Heart right ventricle (tissue), 16 donors: ENCODE measurements at regions of chr3 and their contacts with region 1.

Region 1: GRCh38 chr3:167882067-167882667 is 146.6 kb downstream of the SERPINI1 start:
- DNase-seq: no peak
- ATAC-seq: peak in 4 of 8 donors; percentile 19 to 69 (median 48)
- H3K4me3 ChIP-seq: peak overlapping the region in 2 of 10 donors; percentile 20 to 30
- H3K27ac ChIP-seq: peak overlapping the region in 3 of 10 donors; percentile 12 to 46 (median 38)
- H3K4me1 ChIP-seq: peaks cover 0 to 23% (median 10%) of the 10 kb centered on the region in 9 donors
- H3K27me3 ChIP-seq: no peaks in the 10 kb centered on the region
- CTCF ChIP-seq: peak; percentile 49 to 84 (median 73)

Region 2: DNA sequence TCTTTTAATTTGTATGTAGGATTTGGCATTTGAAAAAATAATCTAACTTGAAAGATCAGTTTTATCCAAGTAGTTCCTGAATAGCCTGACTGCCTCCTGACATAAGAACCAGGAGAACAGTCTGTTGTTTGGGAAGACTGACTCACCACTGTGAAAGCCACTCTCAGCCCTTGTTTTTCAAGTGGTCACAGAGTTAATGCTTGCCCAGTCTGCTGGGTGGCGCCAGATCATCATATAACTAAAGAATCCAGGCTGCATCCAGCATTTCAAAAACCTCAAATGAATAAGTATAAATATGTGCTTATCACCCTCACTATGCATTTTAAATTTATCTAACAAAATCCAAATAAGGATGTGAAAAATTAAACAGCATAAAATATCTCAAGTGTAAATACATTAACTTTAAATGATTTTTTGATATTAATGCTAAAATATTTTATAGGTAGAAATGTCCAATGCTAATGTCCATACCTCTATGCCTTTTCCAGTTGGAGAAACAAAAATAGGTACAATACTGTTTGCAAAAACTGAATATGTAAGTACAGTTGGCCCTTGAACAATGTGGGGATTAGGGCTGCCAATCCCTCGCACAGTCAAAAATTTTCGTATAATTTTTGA is 475.2 kb before region 1 on chr3:
- intact Hi-C with region 1: loop called in 4 of 10 experiments (anchors 5 to 10 kb)
- DNase-seq: peak in 1 of 2 donors; percentile 21
- ATAC-seq: peak in 7 of 8 donors; percentile 43 to 96 (median 83)
- H3K4me3 ChIP-seq: no peak overlapping the region
- H3K27ac ChIP-seq: no peak overlapping the region
- H3K4me1 ChIP-seq: no peaks in the 10 kb centered on the region
- H3K27me3 ChIP-seq: no peaks in the 10 kb centered on the region
- CTCF ChIP-seq: peak in 7 of 9 donors; percentile 36 to 63 (median 52)

Region 3: GRCh38 chr3:167684388-167684993 is 197.7 kb before region 1 on chr3:
- intact Hi-C with region 1: loop called in 2 of 10 experiments (anchors 10 kb)
- DNase-seq: peak in 1 of 2 donors; percentile 63
- ATAC-seq: peak in 3 of 8 donors; percentile 50 to 58 (median 55)
- H3K4me3 ChIP-seq: no peak overlapping the region
- H3K27ac ChIP-seq: no peak overlapping the region
- H3K4me1 ChIP-seq: no peaks in the 10 kb centered on the region
- H3K27me3 ChIP-seq: no peaks in the 10 kb centered on the region
- CTCF ChIP-seq: peak; percentile 62 to 84 (median 79)

Region 4: DNA sequence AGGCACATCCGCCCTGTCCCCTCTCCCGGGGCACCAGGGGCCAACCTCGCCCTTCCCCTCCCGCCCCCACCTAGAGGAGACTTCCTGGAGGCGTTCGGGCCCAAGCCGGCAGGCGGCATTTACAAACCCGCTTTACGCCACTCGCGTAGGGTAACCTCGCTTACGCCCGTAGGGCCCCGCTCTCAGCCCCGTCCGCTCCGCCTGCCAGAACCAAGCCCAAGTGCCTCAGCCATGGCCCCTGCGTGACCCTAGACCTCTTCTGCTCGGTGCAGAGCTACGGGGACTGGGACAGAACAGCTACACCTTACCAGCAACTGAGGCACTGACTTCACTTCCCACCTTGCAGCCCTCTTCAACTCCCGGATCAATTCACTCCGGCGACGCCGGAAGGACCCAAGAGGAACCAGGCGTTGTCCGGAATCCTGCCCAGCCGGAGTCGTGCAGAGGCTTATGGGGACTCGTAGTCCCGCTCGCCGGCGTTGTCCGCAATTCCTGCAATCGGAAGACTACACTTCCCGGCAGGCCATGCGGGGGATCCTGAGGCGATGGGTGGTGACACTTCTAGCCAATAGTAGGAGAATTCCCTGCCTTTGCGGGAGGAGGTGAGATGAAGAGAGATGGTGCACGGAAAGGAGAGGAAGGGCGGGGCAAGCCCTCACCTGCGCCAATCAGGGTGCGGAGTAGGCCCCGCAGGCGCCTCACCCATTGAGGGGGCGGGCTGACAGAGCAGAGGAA is 147.5 kb before region 1 on chr3 and contains the start of gene PDCD10:
- intact Hi-C with region 1: loop called in 5 of 10 experiments (anchors 5 to 10 kb)
- DNase-seq: peak; percentile 97 to 98
- ATAC-seq: peak; percentile 96 to 98 (median 97)
- H3K4me3 ChIP-seq: peak within 1 kb of the TSS; percentile 59 to 96 (median 84)
- H3K27ac ChIP-seq: peak within 1 kb of the TSS; percentile 71 to 96 (median 92)
- H3K4me1 ChIP-seq: peaks cover 0 to 56% (median 47%) of the 10 kb centered on the region in 9 donors
- H3K27me3 ChIP-seq: no peaks in the 10 kb centered on the region
- CTCF ChIP-seq: peak in 1 of 9 donors; percentile 3
- total RNA-seq, gene PDCD10: 28.3 to 44.3 (median 38.1) TPM

Region 5: DNA sequence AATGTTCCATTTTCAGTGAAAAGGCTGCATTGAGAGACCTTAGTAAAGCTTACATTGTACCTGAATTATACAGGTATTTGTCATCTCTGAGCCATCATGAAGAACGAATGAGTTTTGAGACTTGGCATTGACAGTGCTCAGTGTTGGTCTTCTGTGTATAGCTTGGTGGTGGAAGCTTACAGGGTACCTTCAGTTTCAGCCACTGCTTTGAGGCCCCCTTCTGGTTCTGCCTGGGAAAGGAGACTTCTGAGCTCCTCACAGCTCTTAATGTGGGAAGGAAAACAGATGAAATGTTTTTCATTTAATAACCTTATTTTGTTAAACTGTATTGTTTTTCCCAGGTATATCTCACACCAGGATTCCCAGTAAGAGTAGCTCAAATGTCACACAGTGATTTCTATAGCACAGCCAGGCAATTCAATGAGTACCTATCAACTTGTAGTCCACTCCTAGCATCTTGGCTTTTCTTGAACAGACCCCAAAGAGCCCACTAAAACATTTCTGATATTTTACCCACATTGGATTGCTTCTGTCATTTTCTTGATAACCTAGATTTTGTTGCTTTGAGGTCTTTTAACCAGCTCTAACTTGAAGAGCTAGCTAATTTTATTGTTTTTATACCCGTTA is 141.1 kb before region 1 on chr3:
- intact Hi-C with region 1: loop called in 6 of 10 experiments (anchors 5 to 10 kb)
- DNase-seq: no peak
- ATAC-seq: peak in 4 of 8 donors; percentile 57 to 86 (median 69)
- H3K4me3 ChIP-seq: no peak overlapping the region
- H3K27ac ChIP-seq: no peak overlapping the region
- H3K4me1 ChIP-seq: peaks cover 0 to 10% (median 6%) of the 10 kb centered on the region in 9 donors
- H3K27me3 ChIP-seq: no peaks in the 10 kb centered on the region
- CTCF ChIP-seq: peak in 7 of 9 donors; percentile 27 to 60 (median 54)

Region 6: GRCh38 chr3:167837466-167837865 is 44.7 kb before region 1 on chr3:
- intact Hi-C with region 1: loop called in 7 of 10 experiments (anchors 1 to 5 kb)
- DNase-seq: no peak
- ATAC-seq: peak in 4 of 8 donors; percentile 17 to 62 (median 34)
- H3K4me3 ChIP-seq: peak overlapping the region in 2 of 10 donors; percentile 3 to 15
- H3K27ac ChIP-seq: peak overlapping the region in 2 of 10 donors; percentile 24 to 28
- H3K4me1 ChIP-seq: peaks cover 0 to 28% (median 0%) of the 10 kb centered on the region in 9 donors
- H3K27me3 ChIP-seq: no peaks in the 10 kb centered on the region
- CTCF ChIP-seq: peak in 8 of 9 donors; percentile 26 to 70 (median 50)

Region 7: DNA sequence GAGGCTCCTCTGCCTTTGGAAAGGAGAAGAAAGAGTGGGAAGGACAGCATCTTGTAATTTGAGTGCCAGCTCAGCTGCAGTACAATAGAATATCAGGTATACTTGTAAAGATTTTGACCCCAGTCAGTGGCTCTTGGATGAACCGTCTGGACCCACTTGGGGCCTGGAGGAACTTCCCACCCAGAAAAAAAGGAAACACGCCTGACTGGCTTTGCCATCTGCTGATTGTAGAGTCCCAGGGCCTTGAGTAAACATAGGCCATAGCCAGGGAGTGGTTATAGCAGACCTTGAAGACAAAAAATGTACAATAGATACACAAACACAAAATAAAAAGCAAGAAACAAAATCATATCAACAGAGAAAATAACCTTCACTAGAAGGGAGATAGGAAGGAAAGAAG is 101.4 kb after region 1 on chr3:
- intact Hi-C with region 1: no loop called
- DNase-seq: no peak
- ATAC-seq: no peak
- H3K4me3 ChIP-seq: no peak overlapping the region
- H3K27ac ChIP-seq: no peak overlapping the region
- H3K4me1 ChIP-seq: no peaks in the 10 kb centered on the region
- H3K27me3 ChIP-seq: no peaks in the 10 kb centered on the region
- CTCF ChIP-seq: no peak